ENCODE measurements at regions of chr2 and their contacts with region 1.

Region 1: DNA sequence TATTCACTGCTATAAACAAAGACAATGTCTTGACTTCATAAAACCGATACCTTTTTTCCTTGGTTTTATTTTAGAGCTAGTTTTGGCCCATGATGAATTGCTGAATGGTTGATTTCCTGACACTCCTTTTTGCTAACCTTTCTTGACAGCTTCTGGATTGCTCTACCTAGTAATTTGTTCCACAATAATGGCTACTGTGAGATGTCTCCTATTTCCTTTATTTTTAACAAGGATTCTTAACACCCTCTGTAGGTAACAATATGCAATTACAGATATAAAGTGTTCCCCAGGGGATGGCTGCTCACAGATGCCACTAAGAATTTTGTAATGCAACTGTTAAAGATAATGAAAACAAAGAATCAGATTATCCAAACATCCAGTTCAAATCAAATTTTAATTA is 100.8 kb upstream of the ATP5MC3 start:
- DNase-seq: peak; percentile 28
- ATAC-seq: peak; percentile 93
- H3K4me3 ChIP-seq: no peak overlapping the region
- H3K27ac ChIP-seq: no peak overlapping the region
- H3K4me1 ChIP-seq: no peaks in the 10 kb centered on the region
- H3K27me3 ChIP-seq: peaks cover 12% of the 10 kb centered on the region
- CTCF ChIP-seq: peak; percentile 56
- POLR2A ChIP-seq: no peak
- RAD21 ChIP-seq: no peak; the same call in 1 of the 2 replicates

Region 2: GRCh38 chr2:175030380-175031271 is 251.7 kb before region 1 on chr2:
- CTCF ChIA-PET with region 1: interaction called, 3 read pairs
- POLR2A ChIA-PET with region 1: no interaction called
- dilution Hi-C with region 1: no loop called
- in situ Hi-C with region 1: no loop called
- intact Hi-C with region 1: loop called (anchors 2 kb)
- DNase-seq: peak; percentile 58
- ATAC-seq: peak; percentile 96
- H3K4me3 ChIP-seq: no peak overlapping the region
- H3K27ac ChIP-seq: no peak overlapping the region
- H3K4me1 ChIP-seq: peaks cover 2% of the 10 kb centered on the region; the same call in 1 of the 2 replicates
- H3K27me3 ChIP-seq: no peaks in the 10 kb centered on the region
- CTCF ChIP-seq: peak; percentile 51
- POLR2A ChIP-seq: no peak
- RAD21 ChIP-seq: peak; percentile 71

Region 3: DNA sequence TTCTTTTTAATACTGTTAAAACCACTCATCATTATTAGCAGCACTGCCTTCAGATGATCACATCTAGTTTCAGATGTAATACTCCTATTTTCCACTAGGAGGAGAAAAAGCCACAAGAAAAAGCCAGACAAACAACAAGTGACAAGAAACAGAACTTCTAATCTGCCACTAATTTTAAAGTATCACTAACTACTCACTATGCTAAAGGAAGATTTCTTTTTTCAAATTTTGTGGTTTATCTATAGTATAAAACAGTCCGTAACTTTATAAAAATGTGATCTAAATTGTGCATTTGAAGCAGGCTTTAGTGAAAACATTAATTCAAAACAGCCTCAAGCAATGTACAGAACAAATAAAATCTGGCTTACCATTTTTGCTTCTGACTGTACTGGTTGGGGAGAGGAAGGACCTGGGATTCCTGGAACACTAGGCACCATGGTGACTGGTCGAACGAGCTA is 171.1 kb before region 1 on chr2:
- CTCF ChIA-PET with region 1: no interaction called
- POLR2A ChIA-PET with region 1: no interaction called
- dilution Hi-C with region 1: no loop called
- in situ Hi-C with region 1: no loop called
- intact Hi-C with region 1: loop called (anchors 2 kb)
- DNase-seq: peak; percentile 49
- ATAC-seq: peak; percentile 73
- H3K4me3 ChIP-seq: no peak overlapping the region
- H3K27ac ChIP-seq: no peak overlapping the region
- H3K4me1 ChIP-seq: peaks cover 4% of the 10 kb centered on the region
- H3K27me3 ChIP-seq: no peaks in the 10 kb centered on the region
- CTCF ChIP-seq: peak; percentile 64
- POLR2A ChIP-seq: no peak
- RAD21 ChIP-seq: peak; percentile 59

Region 4: GRCh38 chr2:175203621-175204496 is 78.4 kb before region 1 on chr2:
- CTCF ChIA-PET with region 1: interaction called, 8 read pairs
- POLR2A ChIA-PET with region 1: no interaction called
- dilution Hi-C with region 1: no loop called
- in situ Hi-C with region 1: no loop called
- intact Hi-C with region 1: loop called (anchors 1 kb)
- DNase-seq: peak; percentile 47
- ATAC-seq: peak; percentile 99
- H3K4me3 ChIP-seq: no peak overlapping the region
- H3K27ac ChIP-seq: no peak overlapping the region
- H3K4me1 ChIP-seq: no peaks in the 10 kb centered on the region
- H3K27me3 ChIP-seq: peaks cover 4% of the 10 kb centered on the region
- CTCF ChIP-seq: peak; percentile 65
- POLR2A ChIP-seq: no peak
- RAD21 ChIP-seq: peak; percentile 59

Measured in IMR-90 (cell line).